Activated T-helper 1 cell treated with anti-CD3 and anti-CD28 coated beads, Interleukin-12 subunit alpha, Interleukin-12 subunit beta, Interleukin-2, Interleukin-4 antibody, amounts not matched to agents 30 ng/mL and 10 ng/mL and 1 ng/mL, durations not matched to agents 14 hours and 24 hours and 36 hours (primary cell): ENCODE measurements at regions of chr12 and their contacts with region 1.

Region 1: DNA sequence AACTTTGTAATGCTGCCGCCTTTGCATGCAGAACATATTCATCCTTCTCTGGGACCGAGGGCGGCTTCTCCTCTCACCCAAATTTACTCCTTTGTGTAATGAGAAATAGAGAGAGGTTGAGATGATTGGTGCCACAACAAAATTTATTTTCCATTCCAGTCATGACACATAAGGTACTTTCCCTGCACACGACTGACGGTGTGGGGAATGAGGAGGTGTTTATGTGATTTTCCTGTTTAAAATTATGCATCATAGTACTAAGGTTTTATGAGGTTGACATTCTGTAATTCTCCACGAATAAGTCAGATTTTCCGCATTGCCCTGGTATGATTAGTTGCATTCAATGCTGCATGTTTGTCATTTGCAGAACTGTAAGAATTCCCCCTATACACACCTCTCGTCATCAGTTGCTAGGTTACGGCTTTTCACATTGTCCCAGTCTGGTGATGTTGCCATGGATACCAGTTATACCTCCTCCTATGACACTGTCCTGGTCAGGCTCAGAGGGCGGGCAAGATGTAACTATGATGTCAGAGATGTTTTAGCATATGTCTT is 23.1 kb downstream of the BICDL1 start:
- DNase-seq: peak; percentile 84
- H3K4me3 Mint-ChIP-seq: peak overlapping the region; percentile 72
- H3K27ac Mint-ChIP-seq: peak overlapping the region; percentile 95
- H3K4me1 Mint-ChIP-seq: peaks cover 88% of the 10 kb centered on the region
- H3K27me3 Mint-ChIP-seq: no peaks in the 10 kb centered on the region

Region 2: GRCh38 chr12:118035246-118036041 is 1976.7 kb before region 1 on chr12:
- intact Hi-C with region 1: loop called (anchors 10 kb)
- DNase-seq: no peak
- H3K4me3 Mint-ChIP-seq: peak overlapping the region; percentile 57
- H3K27ac Mint-ChIP-seq: peak overlapping the region; percentile 99
- H3K4me1 Mint-ChIP-seq: peaks cover 46% of the 10 kb centered on the region
- H3K27me3 Mint-ChIP-seq: no peaks in the 10 kb centered on the region

Region 3: DNA sequence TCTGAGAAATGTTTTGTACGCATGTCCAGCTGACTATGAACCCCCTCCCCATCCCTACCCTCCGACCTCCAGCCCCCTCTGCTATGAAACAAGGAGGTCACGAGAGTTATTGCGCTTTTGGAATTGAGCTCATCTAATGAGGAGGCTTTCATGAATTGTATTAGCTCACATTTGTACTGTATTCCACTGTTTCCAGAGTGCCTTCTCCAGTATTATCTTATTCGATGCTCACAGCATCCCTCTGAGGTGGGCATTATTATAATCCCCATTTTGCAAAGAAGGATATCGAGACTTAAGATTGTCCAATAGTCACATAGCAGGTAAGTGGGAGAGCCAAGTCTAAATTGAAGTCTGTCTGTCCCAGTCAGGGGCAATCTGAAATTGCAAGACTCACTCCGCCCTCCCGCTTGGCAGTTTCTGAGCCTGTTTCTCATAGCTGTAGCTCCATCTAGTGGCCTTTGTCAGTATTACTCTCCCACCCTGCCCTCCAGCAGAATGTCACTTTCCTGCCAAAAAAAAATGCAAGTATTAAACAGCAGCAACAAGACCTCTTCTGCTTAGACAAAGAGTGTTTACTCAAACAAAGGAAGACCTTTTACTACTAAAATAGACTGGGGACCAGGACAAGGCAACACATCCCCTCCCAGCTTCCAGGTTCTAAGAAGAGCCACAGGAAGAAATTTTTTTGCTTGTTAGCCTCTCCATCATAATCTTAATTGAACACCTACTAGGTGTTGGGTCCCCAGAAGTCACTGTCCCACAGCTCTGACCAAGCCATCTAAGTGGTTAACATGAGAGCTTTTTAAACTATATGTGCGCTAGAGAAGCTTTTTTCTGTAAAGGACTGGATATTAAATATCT is 467.1 kb before region 1 on chr12:
- intact Hi-C with region 1: no loop called
- DNase-seq: peak; percentile 33
- H3K4me3 Mint-ChIP-seq: no peak overlapping the region
- H3K27ac Mint-ChIP-seq: no peak overlapping the region
- H3K4me1 Mint-ChIP-seq: no peaks in the 10 kb centered on the region
- H3K27me3 Mint-ChIP-seq: peaks cover 4% of the 10 kb centered on the region

Region 4: DNA sequence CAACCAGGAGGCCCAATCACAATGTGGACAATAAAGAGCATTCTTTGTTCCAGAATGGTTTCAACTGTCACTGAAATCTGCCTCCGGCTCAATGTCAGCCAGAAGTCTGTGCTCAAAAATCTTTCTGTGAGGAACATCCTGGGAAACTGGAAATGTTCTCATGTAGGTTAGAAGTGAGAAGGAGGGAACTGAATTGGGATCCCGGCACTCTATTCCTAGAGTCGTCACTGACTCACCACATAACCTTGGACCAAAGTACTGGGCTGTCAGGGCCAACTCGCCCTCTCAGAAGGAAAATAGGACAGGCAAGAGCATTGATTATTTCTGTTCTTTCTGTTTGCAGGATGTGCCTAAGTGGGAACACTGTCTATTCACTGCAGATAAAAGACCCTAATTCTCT is 286.6 kb before region 1 on chr12:
- intact Hi-C with region 1: no loop called
- DNase-seq: no peak
- H3K4me3 Mint-ChIP-seq: no peak overlapping the region
- H3K27ac Mint-ChIP-seq: no peak overlapping the region
- H3K4me1 Mint-ChIP-seq: peaks cover 5% of the 10 kb centered on the region
- H3K27me3 Mint-ChIP-seq: no peaks in the 10 kb centered on the region

Region 5: GRCh38 chr12:119959435-119959834 is 52.7 kb before region 1 on chr12:
- intact Hi-C with region 1: no loop called
- DNase-seq: no peak
- H3K4me3 Mint-ChIP-seq: no peak overlapping the region
- H3K27ac Mint-ChIP-seq: no peak overlapping the region
- H3K4me1 Mint-ChIP-seq: peaks cover 4% of the 10 kb centered on the region
- H3K27me3 Mint-ChIP-seq: no peaks in the 10 kb centered on the region

Region 6: DNA sequence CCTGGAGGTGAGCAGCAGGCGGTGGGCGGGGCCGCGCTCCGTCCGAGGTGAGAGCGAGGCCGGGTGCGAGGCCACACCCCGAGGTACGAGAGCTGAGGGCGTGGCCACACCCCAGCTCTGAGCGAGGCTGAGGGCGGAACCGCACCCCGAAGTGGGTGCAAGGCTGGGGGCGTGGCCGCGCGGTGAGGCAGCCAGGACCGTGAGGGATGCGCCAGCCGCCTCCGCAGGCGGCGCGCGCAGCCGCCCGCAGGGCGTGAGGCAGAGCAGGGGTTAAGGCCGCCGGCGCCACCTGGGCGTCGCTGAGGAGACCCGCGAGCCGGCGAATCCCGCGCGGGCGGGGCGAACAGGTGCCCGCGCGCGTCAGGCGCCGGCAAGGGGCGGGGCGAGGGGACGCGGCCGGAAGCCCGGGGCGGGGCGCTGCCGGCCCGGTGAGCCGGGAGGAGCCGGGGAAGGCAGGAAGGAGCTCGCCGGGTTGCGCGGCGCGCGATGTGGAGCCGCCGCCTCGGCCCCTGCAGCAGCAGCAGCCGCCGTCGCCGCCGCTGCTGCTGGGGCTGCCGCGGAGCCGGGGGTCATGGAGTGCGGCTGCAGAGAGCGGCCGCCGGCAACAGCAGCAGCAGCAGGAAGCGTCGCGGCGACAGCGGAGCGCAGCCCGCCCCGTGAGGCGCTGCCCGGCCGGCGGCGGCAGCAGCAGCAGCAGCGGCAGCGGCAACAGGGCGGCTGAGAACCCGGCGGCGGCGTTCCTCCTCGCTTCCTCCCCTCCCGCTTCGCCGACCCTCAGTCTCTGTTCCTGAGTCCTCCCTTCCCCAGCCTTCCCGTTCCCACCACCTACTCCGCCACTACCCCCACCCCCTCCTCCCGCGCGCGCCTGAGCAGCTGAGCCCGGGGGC is 23.1 kb before region 1 on chr12 and contains the start of gene BICDL1:
- intact Hi-C with region 1: loop called (anchors 1 kb)
- DNase-seq: peak; percentile 97
- H3K4me3 Mint-ChIP-seq: peak within 1 kb of the TSS; percentile 94
- H3K27ac Mint-ChIP-seq: peak within 1 kb of the TSS; percentile 95
- H3K4me1 Mint-ChIP-seq: peaks cover 50% of the 10 kb centered on the region
- H3K27me3 Mint-ChIP-seq: peaks cover 11% of the 10 kb centered on the region
- total RNA-seq, gene BICDL1: 136 and 140 TPM in 2 replicates

Region 7: DNA sequence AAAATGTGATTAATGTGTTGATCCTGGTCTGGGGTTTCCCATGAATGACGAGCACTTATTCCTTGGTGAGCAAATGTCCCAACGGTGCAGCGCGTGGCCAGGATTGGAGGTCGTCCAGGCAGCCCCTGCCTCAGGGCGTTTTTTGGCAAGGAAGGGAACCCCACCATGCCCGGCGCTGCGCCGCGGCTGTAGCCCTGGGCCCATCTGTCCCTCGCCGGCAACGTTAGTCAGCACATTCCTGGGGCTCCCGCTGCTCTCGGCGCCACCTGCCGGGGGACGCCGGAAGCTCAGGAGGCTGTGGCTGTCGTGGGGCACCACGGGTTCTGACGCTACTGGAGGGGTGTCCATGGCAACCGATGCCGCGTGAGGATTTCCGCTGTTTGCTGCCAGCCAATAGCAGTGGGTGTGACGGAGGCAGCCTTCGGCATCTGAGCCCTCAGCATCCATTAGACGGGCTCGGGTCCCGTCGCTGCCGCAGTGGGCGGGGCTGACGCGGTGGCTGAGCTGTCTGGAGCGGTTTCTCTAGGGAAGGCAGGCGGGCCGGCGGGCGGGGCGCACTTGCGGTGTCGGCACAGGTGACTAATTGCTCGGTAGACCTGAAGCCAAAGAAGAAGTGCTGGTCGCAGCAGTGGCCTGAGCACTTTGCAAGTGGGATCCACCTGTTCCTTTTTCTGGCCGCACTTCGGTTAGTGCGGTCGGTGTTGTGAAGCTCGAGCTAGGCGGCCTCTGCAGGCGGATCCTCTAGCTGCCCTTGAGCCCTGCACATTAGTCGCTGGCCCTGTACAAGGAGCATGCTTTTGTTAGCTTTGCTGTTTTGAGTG is 74.9 kb after region 1 on chr12:
- intact Hi-C with region 1: loop called (anchors 1 kb)
- DNase-seq: peak; percentile 99
- H3K4me3 Mint-ChIP-seq: peak overlapping the region; percentile 81
- H3K27ac Mint-ChIP-seq: peak overlapping the region; percentile 86
- H3K4me1 Mint-ChIP-seq: peaks cover 32% of the 10 kb centered on the region
- H3K27me3 Mint-ChIP-seq: peaks cover 1% of the 10 kb centered on the region

Region 8: DNA sequence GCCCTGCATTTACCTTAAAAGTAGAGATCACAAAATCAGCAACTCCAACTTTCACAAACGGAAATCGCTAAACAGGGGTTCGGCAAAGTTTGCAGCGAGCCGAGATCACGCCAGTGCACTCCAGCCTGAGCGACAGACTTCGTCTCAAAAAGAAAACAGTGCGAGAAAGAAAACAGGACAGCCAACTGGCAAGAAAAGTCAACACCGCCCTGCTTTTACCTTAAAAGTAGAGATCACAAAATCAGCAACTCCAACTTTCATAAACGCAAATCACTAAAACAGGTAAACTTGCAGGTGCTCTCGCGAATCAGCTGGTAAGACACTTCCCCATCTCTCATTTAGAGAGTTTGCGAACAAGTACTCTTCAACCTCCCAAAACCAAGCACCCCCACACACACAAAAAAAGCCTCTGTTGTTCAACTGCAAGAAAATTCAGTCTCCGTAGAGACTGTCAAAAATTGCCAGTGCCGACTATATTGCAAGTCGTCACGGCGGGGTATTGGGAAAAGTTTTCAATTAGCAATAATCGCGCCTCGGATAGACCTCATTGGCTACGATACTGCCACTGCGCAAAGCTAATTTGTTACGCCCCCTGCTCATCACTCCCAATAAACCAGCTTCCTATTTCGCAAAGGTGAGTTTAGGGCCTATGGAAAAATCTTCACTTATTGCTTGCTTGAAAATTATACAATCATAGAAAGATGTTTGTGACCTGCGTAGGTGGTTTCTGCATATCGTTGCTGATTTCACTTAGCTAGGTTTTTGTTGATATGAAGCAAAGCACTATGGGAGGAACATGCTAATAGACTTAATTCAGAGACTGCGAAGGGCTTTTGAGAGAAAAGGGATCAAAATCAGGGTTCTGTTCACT is 280.8 kb after region 1 on chr12 and contains the start of gene RNU4-1:
- intact Hi-C with region 1: loop called (anchors 2 kb)
- DNase-seq: peak; percentile 74
- H3K4me3 Mint-ChIP-seq: no peak within 1 kb of the TSS
- H3K27ac Mint-ChIP-seq: no peak within 1 kb of the TSS
- H3K4me1 Mint-ChIP-seq: no peaks in the 10 kb centered on the region
- H3K27me3 Mint-ChIP-seq: peaks cover 12% of the 10 kb centered on the region
- total RNA-seq, gene RNU4-1: 2,369 and 3,474 TPM in 2 replicates